ENCODE measurements at regions of chr14 and their contacts with region 1.

Region 1: GRCh38 chr14:44961604-44962333 is at the starts of genes KLHL28 and TOGARAM1:
- DNase-seq: peak; percentile 93 to 99
- ATAC-seq: peak; percentile 89 to 98 (median 93)
- H3K4me3 ChIP-seq: peak within 1 kb of the TSS; percentile 97
- H3K4me3 Mint-ChIP-seq: no peak within 1 kb of the TSS
- H3K27ac ChIP-seq: peak within 1 kb of the TSS; percentile 93
- H3K27ac Mint-ChIP-seq: no peak within 1 kb of the TSS
- H3K4me1 ChIP-seq: peaks cover 23% of the 10 kb centered on the region
- H3K4me1 Mint-ChIP-seq: peaks cover 41 to 43% of the 10 kb centered on the region in 2 donors
- H3K27me3 ChIP-seq: no peaks in the 10 kb centered on the region
- H3K27me3 Mint-ChIP-seq: no peaks in the 10 kb centered on the region
- CTCF ChIP-seq: no peak
- total RNA-seq, gene KLHL28: 47.6 to 59.7 (median 56.0) TPM
- total RNA-seq, gene TOGARAM1: 17.4 to 21.4 (median 19.6) TPM

Region 2: GRCh38 chr14:44756554-44756953 is 205.2 kb before region 1 on chr14:
- intact Hi-C with region 1: no loop called
- DNase-seq: no peak
- ATAC-seq: no peak
- H3K4me3 ChIP-seq: no peak overlapping the region
- H3K4me3 Mint-ChIP-seq: no peak overlapping the region
- H3K27ac ChIP-seq: no peak overlapping the region
- H3K27ac Mint-ChIP-seq: no peak overlapping the region
- H3K4me1 ChIP-seq: no peaks in the 10 kb centered on the region
- H3K4me1 Mint-ChIP-seq: no peaks in the 10 kb centered on the region
- H3K27me3 ChIP-seq: no peaks in the 10 kb centered on the region
- H3K27me3 Mint-ChIP-seq: no peaks in the 10 kb centered on the region
- CTCF ChIP-seq: no peak

Region 3: GRCh38 chr14:44979740-44980356 is 18.1 kb after region 1 on chr14:
- intact Hi-C with region 1: no loop called
- DNase-seq: no peak
- ATAC-seq: no peak
- H3K4me3 ChIP-seq: no peak overlapping the region
- H3K4me3 Mint-ChIP-seq: no peak overlapping the region
- H3K27ac ChIP-seq: no peak overlapping the region
- H3K27ac Mint-ChIP-seq: no peak overlapping the region
- H3K4me1 ChIP-seq: no peaks in the 10 kb centered on the region
- H3K4me1 Mint-ChIP-seq: peaks cover 11 to 26% of the 10 kb centered on the region in 2 donors
- H3K27me3 ChIP-seq: no peaks in the 10 kb centered on the region
- H3K27me3 Mint-ChIP-seq: no peaks in the 10 kb centered on the region
- CTCF ChIP-seq: no peak

Region 4: GRCh38 chr14:45003924-45004323 is 42.2 kb after region 1 on chr14:
- intact Hi-C with region 1: no loop called
- DNase-seq: no peak
- ATAC-seq: no peak
- H3K4me3 ChIP-seq: no peak overlapping the region
- H3K4me3 Mint-ChIP-seq: no peak overlapping the region
- H3K27ac ChIP-seq: no peak overlapping the region
- H3K27ac Mint-ChIP-seq: no peak overlapping the region
- H3K4me1 ChIP-seq: no peaks in the 10 kb centered on the region
- H3K4me1 Mint-ChIP-seq: no peaks in the 10 kb centered on the region
- H3K27me3 ChIP-seq: no peaks in the 10 kb centered on the region
- H3K27me3 Mint-ChIP-seq: no peaks in the 10 kb centered on the region
- CTCF ChIP-seq: no peak

Region 5: DNA sequence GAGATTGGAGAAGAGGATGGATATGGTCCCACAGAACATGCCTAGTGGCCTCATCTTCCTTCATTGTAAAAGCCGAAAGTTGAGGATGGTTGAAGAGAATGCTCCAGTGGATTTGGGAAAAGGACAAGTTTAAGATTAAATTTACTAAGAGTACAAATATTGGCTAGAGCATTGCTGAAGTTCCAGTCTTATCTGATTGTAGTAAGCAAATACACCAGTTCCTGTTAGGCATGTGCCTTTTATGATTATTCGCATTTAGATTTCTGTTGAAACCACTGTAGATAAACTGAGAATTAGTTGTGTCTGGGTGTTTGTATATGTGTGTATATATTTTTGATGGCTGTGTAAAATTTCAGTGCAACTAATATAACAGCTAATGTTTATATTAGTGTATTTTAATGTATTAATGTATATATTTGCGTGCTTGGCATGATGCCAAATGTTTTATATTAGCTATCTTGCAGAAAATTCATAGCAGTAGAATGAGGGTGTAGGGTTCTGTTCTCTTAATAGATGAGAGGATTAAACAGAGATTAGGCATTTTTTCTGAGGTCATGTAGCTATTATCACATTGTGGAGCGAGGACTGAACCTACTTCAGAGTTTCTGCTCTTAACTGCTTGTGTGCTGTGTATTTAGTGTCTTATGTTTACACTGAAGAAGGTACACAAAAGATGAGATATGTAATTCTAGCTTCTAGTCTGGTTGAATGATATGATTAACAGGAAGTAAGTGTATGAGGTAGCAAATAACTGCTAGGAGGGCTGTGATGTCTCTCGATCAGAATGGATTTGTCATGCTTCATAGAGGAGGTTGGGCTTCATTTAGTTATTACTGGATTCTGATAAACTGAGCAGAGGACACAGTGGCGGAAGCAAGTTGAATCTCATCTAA is 151.4 kb after region 1 on chr14:
- intact Hi-C with region 1: no loop called
- DNase-seq: no peak
- ATAC-seq: no peak
- H3K4me3 ChIP-seq: no peak overlapping the region
- H3K4me3 Mint-ChIP-seq: no peak overlapping the region
- H3K27ac ChIP-seq: no peak overlapping the region
- H3K27ac Mint-ChIP-seq: peak overlapping the region; percentile 35 to 36
- H3K4me1 ChIP-seq: no peaks in the 10 kb centered on the region
- H3K4me1 Mint-ChIP-seq: peaks cover 0 to 5% of the 10 kb centered on the region in 2 donors
- H3K27me3 ChIP-seq: no peaks in the 10 kb centered on the region
- H3K27me3 Mint-ChIP-seq: no peaks in the 10 kb centered on the region
- CTCF ChIP-seq: no peak

Region 6: GRCh38 chr14:45253068-45253753 is 291.4 kb after region 1 on chr14 and contains the start of gene MIS18BP1:
- intact Hi-C with region 1: loop called (anchors 1 kb)
- DNase-seq: peak; percentile 87 to 97
- ATAC-seq: peak; percentile 88 to 95 (median 90)
- H3K4me3 ChIP-seq: peak within 1 kb of the TSS; percentile 92
- H3K4me3 Mint-ChIP-seq: peak within 1 kb of the TSS; percentile 93
- H3K27ac ChIP-seq: peak within 1 kb of the TSS; percentile 91
- H3K27ac Mint-ChIP-seq: peak within 1 kb of the TSS; percentile 92 to 94
- H3K4me1 ChIP-seq: peaks cover 27% of the 10 kb centered on the region
- H3K4me1 Mint-ChIP-seq: peaks cover 18 to 20% of the 10 kb centered on the region in 2 donors
- H3K27me3 ChIP-seq: no peaks in the 10 kb centered on the region
- H3K27me3 Mint-ChIP-seq: no peaks in the 10 kb centered on the region
- CTCF ChIP-seq: peak; percentile 86
- total RNA-seq, gene MIS18BP1: 60.3 to 70.2 (median 66.3) TPM